Activated CD4-positive, alpha-beta memory T cell treated with anti-CD3 and anti-CD28 coated beads for 36 hours (primary cell): ENCODE measurements at regions of chr11 and their contacts with region 1.

Region 1: GRCh38 chr11:107565219-107565937 is at the start of gene ALKBH8:
- DNase-seq: peak; percentile 88
- H3K4me3 Mint-ChIP-seq: peak within 1 kb of the TSS; percentile 92
- H3K27ac Mint-ChIP-seq: peak within 1 kb of the TSS; percentile 94
- H3K4me1 Mint-ChIP-seq: peaks cover 45% of the 10 kb centered on the region
- H3K27me3 Mint-ChIP-seq: no peaks in the 10 kb centered on the region
- total RNA-seq, gene ALKBH8: 9.3 to 11.2 TPM

Region 2: DNA sequence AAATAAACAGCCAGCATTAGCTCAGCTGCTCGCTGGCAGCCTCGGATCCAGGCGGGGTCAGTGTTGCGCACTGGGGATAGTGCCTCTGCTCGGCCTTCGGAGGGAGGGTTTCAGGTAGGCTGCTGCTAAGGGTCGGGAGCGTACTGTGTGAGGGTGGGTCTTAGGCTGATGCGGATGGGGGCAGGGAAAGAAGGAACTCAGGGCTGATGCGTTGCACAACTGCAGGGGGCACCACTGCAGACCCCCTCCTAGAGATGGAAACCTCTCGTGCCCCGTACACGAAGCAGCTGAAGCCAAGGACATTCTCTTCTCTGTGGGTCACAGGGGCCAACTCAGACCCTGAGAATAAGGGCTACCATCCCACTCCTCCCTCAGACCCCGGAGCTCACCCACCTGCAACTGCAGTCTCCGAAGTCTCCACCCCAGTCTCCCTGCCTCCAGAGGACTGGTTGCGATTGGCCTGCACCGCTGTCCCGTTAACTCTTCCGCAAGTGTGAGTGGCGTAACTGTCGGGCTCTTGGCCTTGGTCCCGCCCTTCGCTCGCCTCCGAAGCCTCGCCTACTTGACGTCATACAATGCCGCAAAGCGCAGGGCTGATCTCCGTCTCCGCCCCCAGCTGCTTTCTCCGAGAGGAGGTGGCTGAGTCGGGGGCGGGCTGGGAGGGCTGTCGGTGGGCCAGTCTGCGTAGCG is 1488.3 kb before region 1 on chr11 and contains the start of gene KBTBD3:
- CTCF ChIA-PET with region 1: no interaction called
- POLR2A ChIA-PET with region 1: no interaction called
- intact Hi-C with region 1: loop called (anchors 1 kb)
- DNase-seq: peak; percentile 99
- H3K4me3 Mint-ChIP-seq: peak within 1 kb of the TSS; percentile 96
- H3K27ac Mint-ChIP-seq: peak within 1 kb of the TSS; percentile 96
- H3K4me1 Mint-ChIP-seq: peaks cover 52% of the 10 kb centered on the region
- H3K27me3 Mint-ChIP-seq: no peaks in the 10 kb centered on the region
- total RNA-seq, gene KBTBD3: 7.0 to 7.7 TPM

Region 3: GRCh38 chr11:107408762-107409211 is 156.6 kb before region 1 on chr11:
- CTCF ChIA-PET with region 1: no interaction called
- POLR2A ChIA-PET with region 1: no interaction called
- intact Hi-C with region 1: no loop called
- DNase-seq: no peak
- H3K4me3 Mint-ChIP-seq: no peak overlapping the region
- H3K27ac Mint-ChIP-seq: no peak overlapping the region
- H3K4me1 Mint-ChIP-seq: peaks cover 6% of the 10 kb centered on the region
- H3K27me3 Mint-ChIP-seq: no peaks in the 10 kb centered on the region

Region 4: GRCh38 chr11:107549253-107549953 is 16.0 kb before region 1 on chr11:
- CTCF ChIA-PET with region 1: interaction called, 77 read pairs
- POLR2A ChIA-PET with region 1: no interaction called
- intact Hi-C with region 1: loop called (anchors 2 kb)
- DNase-seq: peak; percentile 40
- H3K4me3 Mint-ChIP-seq: no peak overlapping the region
- H3K27ac Mint-ChIP-seq: no peak overlapping the region
- H3K4me1 Mint-ChIP-seq: peaks cover 10% of the 10 kb centered on the region
- H3K27me3 Mint-ChIP-seq: no peaks in the 10 kb centered on the region

Region 5: GRCh38 chr11:107689317-107690202 is 124.2 kb after region 1 on chr11:
- CTCF ChIA-PET with region 1: interaction called, 48 read pairs
- POLR2A ChIA-PET with region 1: interaction called, 3 read pairs
- intact Hi-C with region 1: loop called (anchors 1 kb)
- DNase-seq: peak; percentile 69
- H3K4me3 Mint-ChIP-seq: no peak overlapping the region
- H3K27ac Mint-ChIP-seq: no peak overlapping the region
- H3K4me1 Mint-ChIP-seq: no peaks in the 10 kb centered on the region
- H3K27me3 Mint-ChIP-seq: peaks cover 14% of the 10 kb centered on the region

Region 6: DNA sequence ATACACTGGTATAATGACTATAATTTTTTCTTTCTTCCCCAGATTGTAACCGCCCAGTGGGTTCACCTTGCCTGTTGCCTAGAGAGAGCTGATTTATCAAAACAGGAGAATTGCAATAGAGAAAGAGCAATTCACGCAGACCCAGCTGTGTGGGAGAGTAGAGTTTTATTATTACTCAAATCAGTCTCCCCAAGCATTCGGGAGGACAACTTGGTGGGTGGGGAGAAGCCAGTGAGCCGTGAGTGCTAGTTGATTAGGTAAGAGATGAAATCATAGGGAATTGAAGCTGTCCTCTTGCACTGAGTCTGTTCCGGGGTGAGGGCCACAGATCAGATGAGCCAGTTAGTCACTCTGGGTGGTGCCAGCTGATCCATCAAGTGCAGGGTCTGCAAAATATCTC is 220.0 kb after region 1 on chr11:
- CTCF ChIA-PET with region 1: interaction called, 3 read pairs
- POLR2A ChIA-PET with region 1: no interaction called
- intact Hi-C with region 1: loop called (anchors 1 kb)
- DNase-seq: peak; percentile 79
- H3K4me3 Mint-ChIP-seq: no peak overlapping the region
- H3K27ac Mint-ChIP-seq: peak overlapping the region; percentile 49
- H3K4me1 Mint-ChIP-seq: peaks cover 15% of the 10 kb centered on the region
- H3K27me3 Mint-ChIP-seq: no peaks in the 10 kb centered on the region

Region 7: GRCh38 chr11:107858217-107859070 is 293.1 kb after region 1 on chr11 and contains the start of gene SLC35F2:
- CTCF ChIA-PET with region 1: no interaction called
- POLR2A ChIA-PET with region 1: no interaction called
- intact Hi-C with region 1: loop called (anchors 2 kb)
- DNase-seq: peak; percentile 83
- H3K4me3 Mint-ChIP-seq: peak within 1 kb of the TSS; percentile 95
- H3K27ac Mint-ChIP-seq: peak within 1 kb of the TSS; percentile 92
- H3K4me1 Mint-ChIP-seq: peaks cover 31% of the 10 kb centered on the region
- H3K27me3 Mint-ChIP-seq: no peaks in the 10 kb centered on the region
- total RNA-seq, gene SLC35F2: 22.8 to 24.5 TPM

Region 8: DNA sequence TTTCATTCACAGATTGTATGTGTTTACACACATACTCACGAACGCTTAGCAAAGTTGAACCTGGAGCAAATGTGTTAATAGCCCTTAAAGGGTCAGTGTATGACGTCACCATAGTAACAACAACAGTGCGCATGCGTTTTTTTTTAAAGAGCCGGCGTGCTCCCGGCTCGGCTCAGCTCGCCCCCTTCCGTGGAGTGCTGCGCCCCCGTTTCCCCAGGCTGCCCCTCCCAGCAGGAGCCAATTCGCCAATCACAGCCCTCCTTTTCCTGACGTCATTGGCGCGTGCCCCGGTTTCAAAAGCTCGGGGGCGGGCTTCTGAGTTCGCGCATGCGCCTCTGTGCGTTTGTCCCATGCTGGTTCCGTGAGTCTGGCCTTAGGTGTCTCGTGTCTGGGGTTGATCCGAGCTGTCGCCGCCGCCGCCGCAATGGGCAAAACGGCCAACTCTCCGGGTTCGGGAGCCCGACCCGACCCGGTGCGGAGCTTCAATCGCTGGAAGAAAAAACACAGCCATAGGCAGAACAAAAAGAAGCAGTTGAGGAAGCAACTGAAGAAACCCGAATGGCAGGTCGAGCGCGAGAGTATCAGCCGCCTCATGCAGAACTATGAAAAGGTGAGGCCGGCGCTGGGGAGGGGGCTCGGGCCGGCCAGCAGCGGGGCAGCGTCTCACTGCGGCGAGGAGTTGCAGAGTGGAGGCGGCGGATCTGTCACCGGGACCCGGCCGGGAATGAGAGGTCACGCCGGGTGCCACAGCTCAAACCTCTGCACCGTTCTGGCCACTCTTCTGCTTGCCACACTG is 1099.5 kb after region 1 on chr11 and contains the start of gene DDX10:
- CTCF ChIA-PET with region 1: no interaction called
- POLR2A ChIA-PET with region 1: no interaction called
- intact Hi-C with region 1: loop called (anchors 10 kb)
- DNase-seq: peak; percentile 99
- H3K4me3 Mint-ChIP-seq: peak within 1 kb of the TSS; percentile 100
- H3K27ac Mint-ChIP-seq: peak within 1 kb of the TSS; percentile 80
- H3K4me1 Mint-ChIP-seq: peaks cover 44% of the 10 kb centered on the region
- H3K27me3 Mint-ChIP-seq: no peaks in the 10 kb centered on the region
- total RNA-seq, gene DDX10: 34.8 to 37.7 TPM